GM12878 (cell line): ENCODE measurements at regions of chr22 and their contacts with region 1.

Region 1: DNA sequence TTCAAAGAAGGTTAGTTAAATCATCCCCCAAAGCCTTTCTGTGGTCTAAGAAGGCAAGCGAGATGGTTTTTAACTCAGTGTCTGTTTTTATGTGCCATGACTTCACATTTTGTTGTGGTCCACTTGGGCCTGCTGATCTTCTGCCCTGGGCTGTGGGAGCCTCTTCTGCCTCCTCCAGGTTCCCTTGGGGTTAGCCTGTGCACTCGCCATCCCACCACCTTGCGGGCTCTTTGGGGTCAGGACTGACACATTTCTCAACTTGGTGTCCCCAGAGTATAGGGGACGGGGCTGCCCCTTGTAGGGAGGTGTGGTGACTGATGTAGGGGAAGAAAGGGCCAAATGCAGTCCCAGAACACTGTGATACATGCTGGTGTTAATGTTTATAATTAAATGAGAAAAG is 207.0 kb downstream of the TBC1D22A start:
- DNase-seq: peak; percentile 69
- ATAC-seq: peak; percentile 97
- H3K4me3 ChIP-seq: no peak overlapping the region
- H3K27ac ChIP-seq: no peak overlapping the region
- H3K4me1 ChIP-seq: peaks cover 16% of the 10 kb centered on the region
- H3K27me3 ChIP-seq: no peaks in the 10 kb centered on the region
- CTCF ChIP-seq: peak in 1 of 3 experiments; percentile 11; a peak in 1 of 6 replicates
- EP300 ChIP-seq: peak in 1 of 2 experiments; percentile 54; a peak in 1 of 4 replicates
- POLR2A ChIP-seq: no peak
- RAD21 ChIP-seq: peak; percentile 28; the same call in 1 of the 2 replicates

Region 2: GRCh38 chr22:47000888-47001287 is 31.4 kb after region 1 on chr22:
- CTCF ChIA-PET with region 1: no interaction called
- POLR2A ChIA-PET with region 1: no interaction called
- RAD21 ChIA-PET with region 1: no interaction called
- SMC1A ChIA-PET with region 1: interaction called, 3 read pairs
- in situ Hi-C with region 1: no loop called
- intact Hi-C with region 1: loop called (anchors 5 kb)
- DNase-seq: peak; percentile 33
- ATAC-seq: peak; percentile 87
- H3K4me3 ChIP-seq: peak overlapping the region; percentile 51; the same call in 1 of the 2 replicates
- H3K27ac ChIP-seq: peak overlapping the region; percentile 41
- H3K4me1 ChIP-seq: peaks cover 9% of the 10 kb centered on the region
- H3K27me3 ChIP-seq: no peaks in the 10 kb centered on the region
- CTCF ChIP-seq: no peak
- EP300 ChIP-seq: no peak
- POLR2A ChIP-seq: no peak
- RAD21 ChIP-seq: no peak